CD4-positive, alpha-beta memory T cell (primary cell): ENCODE measurements at regions of chr2 and their contacts with region 1.

Region 1: DNA sequence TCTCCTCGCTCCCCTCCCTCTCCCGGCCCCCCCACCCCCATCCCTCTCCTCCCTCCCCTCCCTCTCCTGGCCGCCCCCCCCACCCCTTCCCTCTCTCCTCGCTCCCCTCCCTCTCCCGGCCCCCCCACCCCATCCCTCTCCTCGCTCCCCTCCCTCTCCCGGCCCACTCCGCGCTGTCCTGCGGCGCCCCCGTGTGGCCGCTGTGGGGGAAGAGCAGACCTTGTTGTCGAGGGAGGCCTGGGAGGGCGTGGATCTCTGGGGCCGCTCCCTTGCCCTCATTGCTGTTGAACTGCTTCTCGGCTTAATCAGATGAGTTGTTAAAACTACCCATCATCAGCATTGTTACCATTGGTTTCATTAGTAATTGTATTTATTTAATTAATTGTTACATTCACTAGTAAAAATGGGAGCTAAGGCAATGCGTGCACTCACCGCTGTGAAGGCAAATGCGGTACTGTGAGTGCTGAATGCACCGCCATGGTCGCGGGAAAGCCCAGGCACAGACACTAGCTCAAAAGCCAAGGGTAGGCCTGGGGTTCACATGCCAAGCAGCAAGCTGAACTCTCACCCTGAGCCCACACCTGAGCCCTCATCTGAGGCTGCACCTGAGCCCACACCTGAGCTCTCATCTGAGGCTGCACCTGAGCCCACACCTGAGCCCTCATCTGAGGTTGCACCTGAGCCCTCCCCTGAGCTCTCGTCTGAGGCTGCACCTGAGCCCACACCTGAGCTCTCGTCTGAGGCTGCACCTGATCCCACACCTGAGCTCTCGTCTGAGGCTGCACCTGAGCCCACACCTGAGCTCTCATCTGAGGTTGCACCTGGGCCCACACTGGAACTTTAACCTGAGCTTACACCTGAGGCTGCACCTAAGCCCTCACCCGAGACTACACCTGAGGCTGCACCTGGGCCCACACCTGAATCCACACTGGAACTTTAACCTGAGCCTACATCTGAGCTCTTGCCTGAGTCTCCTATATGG is 8.8 kb downstream of the RTP5 start:
- DNase-seq: peak; percentile 67 to 80 (median 75)
- H3K4me3 ChIP-seq: no peak overlapping the region
- H3K4me3 Mint-ChIP-seq: no peak overlapping the region
- H3K27ac ChIP-seq: no peak overlapping the region
- H3K27ac Mint-ChIP-seq: peak overlapping the region in 3 of 7 donors; percentile 15 to 77 (median 52)
- H3K4me1 ChIP-seq: peaks cover 29% of the 10 kb centered on the region
- H3K4me1 Mint-ChIP-seq: peaks cover 11 to 38% (median 28%) of the 10 kb centered on the region in 4 donors
- H3K27me3 ChIP-seq: no peaks in the 10 kb centered on the region
- H3K27me3 Mint-ChIP-seq: peaks cover 0 to 3% of the 10 kb centered on the region in 2 donors

Region 2: GRCh38 chr2:240566203-240567136 is 1311.8 kb before region 1 on chr2:
- CTCF ChIA-PET with region 1: no interaction called
- POLR2A ChIA-PET with region 1: no interaction called
- intact Hi-C with region 1: loop called (anchors 5 kb)
- DNase-seq: peak; percentile 91 to 96 (median 92)
- H3K4me3 ChIP-seq: peak overlapping the region; percentile 79 to 87
- H3K4me3 Mint-ChIP-seq: peak overlapping the region; percentile 90 to 98 (median 94)
- H3K27ac ChIP-seq: peak overlapping the region; percentile 89
- H3K27ac Mint-ChIP-seq: peak overlapping the region; percentile 98 to 99 (median 99)
- H3K4me1 ChIP-seq: peaks cover 86% of the 10 kb centered on the region
- H3K4me1 Mint-ChIP-seq: peaks cover 46 to 89% (median 69%) of the 10 kb centered on the region in 4 donors
- H3K27me3 ChIP-seq: no peaks in the 10 kb centered on the region
- H3K27me3 Mint-ChIP-seq: no peaks in the 10 kb centered on the region

Region 3: DNA sequence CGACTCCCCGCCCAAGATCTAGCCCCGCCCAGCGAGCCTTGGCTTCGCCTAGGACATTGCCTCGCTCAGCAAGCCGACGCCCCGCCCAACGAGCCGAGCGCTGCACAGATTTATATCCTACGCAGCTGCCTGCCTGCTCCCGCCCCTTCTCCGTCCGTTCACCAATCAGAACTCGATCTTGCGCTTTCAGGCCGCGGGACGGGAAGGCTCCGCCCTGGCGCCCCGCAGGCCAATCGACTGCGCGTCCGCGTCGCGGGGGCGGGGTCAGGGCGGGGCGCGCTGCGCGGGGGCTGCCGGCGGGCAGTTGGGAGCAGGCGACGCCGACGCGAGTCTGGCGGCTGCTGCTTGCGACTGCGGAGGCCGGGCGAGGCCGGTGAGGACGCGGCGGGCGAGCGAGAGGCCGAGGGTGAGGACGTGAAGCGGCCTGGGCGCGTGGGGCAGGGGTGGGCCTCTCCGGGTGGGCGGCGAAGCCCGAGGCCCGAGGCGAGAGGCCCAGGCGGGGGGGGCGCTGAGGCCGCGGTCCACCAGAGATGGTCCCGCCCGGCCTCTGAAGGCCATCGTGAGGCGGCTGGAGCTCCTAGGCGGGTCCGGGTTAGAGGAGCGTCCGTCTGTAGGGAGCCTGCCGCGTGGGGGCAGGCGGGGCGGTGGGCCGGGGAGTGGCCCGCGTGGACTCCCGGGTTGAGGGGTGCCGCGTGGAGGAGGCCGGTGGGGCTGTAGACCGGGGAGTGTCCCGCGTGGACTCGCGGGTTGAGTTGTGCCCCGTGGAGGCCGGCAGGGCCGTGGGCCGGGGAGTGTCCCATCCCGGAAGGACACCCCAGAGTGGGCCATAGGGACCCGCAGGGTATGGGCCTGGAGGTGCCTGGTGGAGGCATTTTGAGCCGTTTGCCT is 522.1 kb before region 1 on chr2 and contains the start of gene FARP2:
- CTCF ChIA-PET with region 1: no interaction called
- POLR2A ChIA-PET with region 1: no interaction called
- intact Hi-C with region 1: loop called (anchors 5 kb)
- DNase-seq: peak; percentile 97 to 99 (median 98)
- H3K4me3 ChIP-seq: peak within 1 kb of the TSS; percentile 47 to 63
- H3K4me3 Mint-ChIP-seq: peak within 1 kb of the TSS; percentile 82 to 89 (median 86)
- H3K27ac ChIP-seq: peak within 1 kb of the TSS; percentile 57
- H3K27ac Mint-ChIP-seq: peak within 1 kb of the TSS; percentile 77 to 97 (median 93)
- H3K4me1 ChIP-seq: peaks cover 15% of the 10 kb centered on the region
- H3K4me1 Mint-ChIP-seq: peaks cover 6 to 26% (median 15%) of the 10 kb centered on the region in 4 donors
- H3K27me3 ChIP-seq: no peaks in the 10 kb centered on the region
- H3K27me3 Mint-ChIP-seq: no peaks in the 10 kb centered on the region
- total RNA-seq, gene FARP2: 17.2 to 21.8 TPM

Region 4: DNA sequence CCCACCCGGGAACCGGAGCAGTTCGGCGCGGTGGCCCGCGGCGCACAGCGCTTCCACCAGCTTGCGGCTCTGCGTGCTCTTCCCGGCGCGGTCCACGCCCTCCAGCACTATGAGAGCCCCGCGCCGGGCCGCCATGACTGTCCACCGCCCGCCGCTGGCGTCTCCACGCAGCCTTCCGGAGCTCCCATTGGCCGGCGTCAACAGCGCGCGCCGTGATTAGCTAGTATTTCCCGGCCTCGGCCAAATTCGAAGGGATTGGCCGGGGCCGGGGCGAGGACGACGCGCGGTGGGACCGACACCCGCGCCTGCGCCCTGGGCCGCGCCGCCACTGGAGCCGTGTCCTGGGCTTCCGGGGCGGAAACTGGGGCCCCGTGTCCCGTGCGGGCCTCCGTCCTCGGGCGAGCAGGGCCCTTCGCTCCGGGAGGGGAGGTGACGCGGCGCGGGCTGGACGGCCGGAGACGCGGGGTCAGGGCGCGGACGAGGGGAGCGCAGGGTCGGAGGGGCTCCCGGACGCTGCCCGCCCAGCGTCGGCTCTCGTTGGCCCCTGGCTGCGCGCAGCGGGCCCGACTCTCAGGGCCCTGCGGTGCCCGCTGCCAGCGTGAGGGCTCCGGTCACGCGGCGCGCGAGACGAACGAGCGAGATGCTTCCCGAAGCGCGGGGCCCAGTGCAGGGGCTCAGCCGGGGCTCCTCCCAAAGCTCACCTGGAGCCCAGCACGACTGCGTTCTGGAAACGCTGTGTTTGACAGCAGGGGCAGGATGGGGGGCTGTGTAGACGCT is 191.4 kb before region 1 on chr2 and contains the start of gene DTYMK:
- CTCF ChIA-PET with region 1: interaction called, 17 read pairs
- POLR2A ChIA-PET with region 1: interaction called, 3 read pairs
- intact Hi-C with region 1: loop called (anchors 1 kb)
- DNase-seq: peak; percentile 95 to 98 (median 97)
- H3K4me3 ChIP-seq: peak within 1 kb of the TSS; percentile 57 to 89
- H3K4me3 Mint-ChIP-seq: peak within 1 kb of the TSS; percentile 87 to 96 (median 94)
- H3K27ac ChIP-seq: peak within 1 kb of the TSS; percentile 80
- H3K27ac Mint-ChIP-seq: peak within 1 kb of the TSS; percentile 85 to 93 (median 91)
- H3K4me1 ChIP-seq: peaks cover 32% of the 10 kb centered on the region
- H3K4me1 Mint-ChIP-seq: peaks cover 14 to 40% (median 26%) of the 10 kb centered on the region in 4 donors
- H3K27me3 ChIP-seq: no peaks in the 10 kb centered on the region
- H3K27me3 Mint-ChIP-seq: no peaks in the 10 kb centered on the region
- total RNA-seq, gene DTYMK: 18.8 TPM

Region 5: DNA sequence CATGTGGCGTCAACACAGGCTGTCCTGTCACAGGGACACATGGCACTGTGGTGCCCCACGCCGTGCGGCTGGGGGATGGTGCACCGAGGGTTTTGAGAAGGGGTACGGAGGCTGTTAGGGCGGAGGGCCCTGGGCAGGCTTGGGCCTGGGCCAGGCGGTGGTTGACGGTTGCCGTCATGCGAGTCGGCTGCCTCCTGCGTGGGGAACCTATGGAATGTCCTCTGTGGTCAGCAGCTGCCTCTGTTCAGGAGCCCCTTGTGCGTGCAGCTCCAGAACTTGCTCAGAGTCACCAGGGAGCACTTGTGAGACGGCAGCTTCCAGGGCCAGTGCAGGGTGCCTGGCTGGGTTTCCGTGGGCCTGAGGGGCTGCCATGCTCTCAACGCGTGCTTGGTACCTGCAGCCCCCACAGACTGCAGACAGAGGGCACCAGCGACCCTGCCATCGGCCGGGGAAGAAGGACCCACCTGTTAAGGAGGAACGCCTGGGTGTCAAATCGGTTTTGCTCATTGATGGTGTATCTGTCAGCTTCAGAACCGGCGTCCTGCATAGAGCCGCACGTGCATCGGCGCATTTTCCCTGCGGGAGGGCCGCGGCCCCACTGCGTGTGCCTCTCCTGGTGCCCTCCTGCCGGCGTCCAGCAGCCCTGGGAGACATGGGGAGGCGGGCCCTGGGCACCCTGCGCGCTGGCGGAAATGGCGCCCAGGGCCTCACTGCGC is 153.9 kb before region 1 on chr2:
- CTCF ChIA-PET with region 1: interaction called, 13 read pairs
- POLR2A ChIA-PET with region 1: no interaction called
- intact Hi-C with region 1: loop called (anchors 2 kb)
- DNase-seq: peak in 1 of 5 donors; percentile 36
- H3K4me3 ChIP-seq: no peak overlapping the region
- H3K4me3 Mint-ChIP-seq: no peak overlapping the region
- H3K27ac ChIP-seq: no peak overlapping the region
- H3K27ac Mint-ChIP-seq: no peak overlapping the region
- H3K4me1 ChIP-seq: no peaks in the 10 kb centered on the region
- H3K4me1 Mint-ChIP-seq: no peaks in the 10 kb centered on the region
- H3K27me3 ChIP-seq: no peaks in the 10 kb centered on the region
- H3K27me3 Mint-ChIP-seq: no peaks in the 10 kb centered on the region

Region 6: GRCh38 chr2:241762933-241763369 is 115.3 kb before region 1 on chr2:
- CTCF ChIA-PET with region 1: interaction called, 16 read pairs
- POLR2A ChIA-PET with region 1: interaction called, 5 read pairs
- intact Hi-C with region 1: no loop called
- DNase-seq: peak; percentile 78 to 92 (median 85)
- H3K4me3 ChIP-seq: peak overlapping the region in 1 of 2 donors; percentile 46
- H3K4me3 Mint-ChIP-seq: peak overlapping the region; percentile 59 to 85 (median 83)
- H3K27ac ChIP-seq: peak overlapping the region; percentile 56
- H3K27ac Mint-ChIP-seq: peak overlapping the region; percentile 89 to 99 (median 97)
- H3K4me1 ChIP-seq: peaks cover 42% of the 10 kb centered on the region
- H3K4me1 Mint-ChIP-seq: peaks cover 27 to 51% (median 35%) of the 10 kb centered on the region in 4 donors
- H3K27me3 ChIP-seq: no peaks in the 10 kb centered on the region
- H3K27me3 Mint-ChIP-seq: no peaks in the 10 kb centered on the region

Region 7: GRCh38 chr2:241865957-241866789 is 12.1 kb before region 1 on chr2:
- CTCF ChIA-PET with region 1: interaction called, 29 read pairs
- POLR2A ChIA-PET with region 1: interaction called, 11 read pairs
- intact Hi-C with region 1: no loop called
- DNase-seq: no peak
- H3K4me3 ChIP-seq: no peak overlapping the region
- H3K4me3 Mint-ChIP-seq: peak overlapping the region in 3 of 8 donors; percentile 10 to 65 (median 56)
- H3K27ac ChIP-seq: no peak overlapping the region
- H3K27ac Mint-ChIP-seq: peak overlapping the region in 4 of 7 donors; percentile 24 to 87 (median 62)
- H3K4me1 ChIP-seq: peaks cover 78% of the 10 kb centered on the region
- H3K4me1 Mint-ChIP-seq: peaks cover 54 to 80% (median 65%) of the 10 kb centered on the region in 4 donors
- H3K27me3 ChIP-seq: no peaks in the 10 kb centered on the region
- H3K27me3 Mint-ChIP-seq: peaks cover 0 to 5% of the 10 kb centered on the region in 2 donors

Region 8: GRCh38 chr2:241908686-241909420 is 30.6 kb after region 1 on chr2:
- CTCF ChIA-PET with region 1: no interaction called
- POLR2A ChIA-PET with region 1: no interaction called
- intact Hi-C with region 1: no loop called
- DNase-seq: no peak
- H3K4me3 ChIP-seq: no peak overlapping the region
- H3K4me3 Mint-ChIP-seq: no peak overlapping the region
- H3K27ac ChIP-seq: no peak overlapping the region
- H3K27ac Mint-ChIP-seq: no peak overlapping the region
- H3K4me1 ChIP-seq: no peaks in the 10 kb centered on the region
- H3K4me1 Mint-ChIP-seq: peaks cover 0 to 4% (median 1%) of the 10 kb centered on the region in 4 donors
- H3K27me3 ChIP-seq: no peaks in the 10 kb centered on the region
- H3K27me3 Mint-ChIP-seq: no peaks in the 10 kb centered on the region